ENCODE measurements at regions of chr6 and their contacts with region 1.

Region 1: DNA sequence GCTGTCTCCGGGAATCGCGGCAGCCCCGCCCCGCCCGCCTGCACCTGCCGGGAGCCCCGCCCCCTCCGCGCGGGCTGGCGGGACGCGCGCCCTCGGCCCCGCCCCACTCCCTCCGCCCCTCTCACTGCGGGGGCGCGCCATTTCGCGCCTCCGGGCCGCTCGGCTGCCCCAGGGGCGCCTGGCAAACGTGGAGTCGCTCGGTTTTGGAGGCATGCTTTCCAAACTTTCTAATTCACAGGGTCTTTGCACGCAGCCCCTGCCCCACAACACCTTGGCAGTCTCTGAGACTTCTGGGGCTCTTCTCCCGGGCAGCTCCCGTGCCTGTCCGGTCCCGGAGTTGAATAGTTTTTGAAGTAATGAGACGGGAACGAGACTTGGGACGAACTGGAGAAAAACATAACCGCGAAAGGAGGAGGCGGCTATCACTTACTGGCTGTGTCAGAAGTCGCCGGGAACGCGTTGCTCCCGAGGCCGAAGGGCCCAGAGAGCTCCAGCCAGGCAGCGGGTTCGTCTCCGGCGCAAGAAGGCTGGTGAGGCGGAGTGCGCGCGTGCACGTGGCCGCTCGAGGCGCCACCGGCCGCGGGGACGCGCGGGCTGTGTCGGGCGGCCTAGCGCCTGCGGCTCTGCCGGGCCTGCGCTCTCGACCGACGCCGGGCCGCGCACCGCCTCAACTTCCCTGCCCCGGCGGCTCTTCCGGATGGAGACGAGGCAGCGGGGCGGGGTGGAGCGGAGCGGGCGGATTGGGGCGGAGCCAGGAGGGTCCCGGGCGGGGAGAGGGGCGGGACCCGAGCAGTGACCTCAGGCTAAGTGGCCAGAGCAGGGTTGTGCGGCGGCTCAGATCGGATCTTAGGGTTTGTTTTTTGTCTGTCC is at the start of gene MCM9:
- DNase-seq: peak; percentile 82
- H3K4me3 ChIP-seq: peak within 1 kb of the TSS; percentile 66 to 98 (median 95)
- H3K27ac ChIP-seq: peak within 1 kb of the TSS; percentile 86
- H3K4me1 ChIP-seq: no peaks in the 10 kb centered on the region
- H3K27me3 ChIP-seq: no peaks in the 10 kb centered on the region
- CTCF ChIP-seq: no peak
- total RNA-seq, gene MCM9: 12.3 to 15.2 TPM

Region 2: DNA sequence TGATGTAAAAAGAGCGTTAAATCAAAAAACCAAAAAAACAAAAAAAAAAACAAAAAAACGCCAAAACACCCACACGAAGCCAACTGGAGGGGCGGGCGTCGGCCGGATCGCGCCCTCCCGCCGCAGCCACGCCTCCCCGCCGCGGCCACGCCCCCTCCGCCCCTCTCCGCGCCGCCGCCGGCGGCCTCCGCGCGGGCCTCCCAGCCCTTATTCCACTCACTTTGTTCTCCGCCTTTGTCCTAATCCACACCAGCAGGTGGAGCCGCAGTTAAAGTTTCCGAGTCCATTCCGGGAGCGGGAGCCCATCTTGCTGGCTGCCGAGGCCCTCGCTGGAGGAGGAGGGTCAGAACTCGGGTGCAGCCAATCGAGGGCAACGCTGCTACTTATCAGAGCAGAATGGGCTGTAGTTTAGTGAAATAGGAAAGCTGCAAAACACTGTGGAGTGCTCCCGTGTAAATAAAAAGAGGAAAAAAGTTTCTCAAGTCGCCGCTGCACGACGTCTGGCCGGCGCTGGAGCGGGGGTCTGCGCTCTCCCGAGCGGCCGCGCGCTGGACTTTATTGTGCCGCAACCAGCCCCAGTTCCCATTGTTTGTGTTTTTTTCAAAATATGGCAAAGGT is 40.8 kb before region 1 on chr6 and contains the start of gene ASF1A:
- CTCF ChIA-PET with region 1: no interaction called
- dilution Hi-C with region 1: no loop called
- in situ Hi-C with region 1: no loop called
- intact Hi-C with region 1: loop called (anchors 2 kb)
- DNase-seq: peak; percentile 98
- H3K4me3 ChIP-seq: peak within 1 kb of the TSS; percentile 82 to 99 (median 97)
- H3K27ac ChIP-seq: peak within 1 kb of the TSS; percentile 89
- H3K4me1 ChIP-seq: peaks cover 22% of the 10 kb centered on the region
- H3K27me3 ChIP-seq: no peaks in the 10 kb centered on the region
- CTCF ChIP-seq: peak; percentile 50 to 74
- total RNA-seq, gene ASF1A: 19.8 to 29.0 TPM

Region 3: GRCh38 chr6:118945217-118945616 is 10.5 kb after region 1 on chr6:
- CTCF ChIA-PET with region 1: no interaction called
- dilution Hi-C with region 1: no loop called
- in situ Hi-C with region 1: no loop called
- intact Hi-C with region 1: no loop called
- DNase-seq: no peak
- H3K4me3 ChIP-seq: no peak overlapping the region
- H3K27ac ChIP-seq: no peak overlapping the region
- H3K4me1 ChIP-seq: no peaks in the 10 kb centered on the region
- H3K27me3 ChIP-seq: peaks cover 2% of the 10 kb centered on the region
- CTCF ChIP-seq: no peak

Region 4: DNA sequence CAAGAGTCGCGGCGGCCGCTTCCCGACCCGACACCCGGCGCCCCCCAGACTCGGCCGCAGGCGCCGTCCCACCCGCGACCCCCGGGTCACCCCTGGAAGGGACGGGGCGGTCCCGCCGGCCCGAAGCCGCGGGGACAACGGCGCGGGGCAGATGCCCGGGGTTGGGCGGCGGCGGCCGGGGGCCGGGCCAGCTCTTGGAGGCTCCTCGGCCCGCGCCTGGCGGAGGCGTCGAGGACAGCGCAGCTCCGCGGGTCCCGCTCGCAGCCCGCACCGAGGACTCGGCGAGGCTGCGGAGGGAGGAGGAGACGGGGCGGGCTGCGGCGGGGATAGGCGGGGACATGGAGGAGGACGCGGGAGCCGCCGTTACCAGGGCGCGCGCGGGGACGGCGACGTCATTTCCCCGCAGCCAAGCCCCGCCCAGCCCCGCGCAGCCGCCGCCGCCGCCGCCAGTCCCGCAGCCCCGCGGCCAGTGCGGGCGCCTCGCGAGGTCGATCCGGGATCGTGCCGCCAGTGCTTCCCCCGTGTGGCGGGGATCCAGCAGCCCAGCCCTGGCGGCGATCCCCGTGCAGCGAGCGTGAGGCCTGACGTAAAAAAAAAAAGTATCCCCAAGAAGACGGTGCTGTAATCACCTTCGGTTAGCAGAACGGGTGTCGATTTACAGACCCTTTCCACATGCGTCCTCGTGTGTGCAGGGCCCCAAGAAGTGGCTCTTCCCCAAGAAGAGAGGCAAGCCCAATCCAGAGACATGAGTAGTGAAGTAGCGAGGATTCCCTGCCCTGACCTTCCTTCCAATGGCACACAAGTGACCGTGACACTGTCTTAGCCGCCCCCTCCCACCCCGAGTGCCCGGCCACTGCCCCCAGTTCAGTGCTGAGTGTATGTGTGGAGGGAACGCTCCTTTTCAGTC is 143.9 kb after region 1 on chr6 and contains the start of gene FAM184A:
- CTCF ChIA-PET with region 1: no interaction called
- dilution Hi-C with region 1: no loop called
- in situ Hi-C with region 1: no loop called
- intact Hi-C with region 1: no loop called
- DNase-seq: peak; percentile 18
- H3K4me3 ChIP-seq: peak within 1 kb of the TSS; percentile 33 to 54 (median 39)
- H3K27ac ChIP-seq: no peak within 1 kb of the TSS
- H3K4me1 ChIP-seq: peaks cover 12% of the 10 kb centered on the region
- H3K27me3 ChIP-seq: peaks cover 8% of the 10 kb centered on the region
- CTCF ChIP-seq: peak; percentile 4 to 32
- total RNA-seq, gene FAM184A: 0.17 TPM in 1 of 2 donors, not detected in the other

Measured in mammary epithelial cell (primary cell).